AG04450 (cell line): ENCODE measurements at regions of chr20 and their contacts with region 1.

Region 1: GRCh38 chr20:13546497-13547131 is 92.1 kb downstream of the TASP1 start:
- DNase-seq: peak; percentile 30
- H3K4me3 ChIP-seq: no peak overlapping the region
- H3K27ac ChIP-seq: no peak overlapping the region
- H3K27me3 ChIP-seq: no peaks in the 10 kb centered on the region
- CTCF ChIP-seq: peak; percentile 75

Region 2: GRCh38 chr20:12925214-12925755 is 621.3 kb before region 1 on chr20:
- CTCF ChIA-PET with region 1: interaction called, 12 read pairs
- POLR2A ChIA-PET with region 1: no interaction called
- DNase-seq: peak; percentile 77
- H3K4me3 ChIP-seq: no peak overlapping the region
- H3K27ac ChIP-seq: no peak overlapping the region
- H3K27me3 ChIP-seq: peaks cover 18% of the 10 kb centered on the region
- CTCF ChIP-seq: peak; percentile 99

Region 3: GRCh38 chr20:13333793-13334192 is 212.8 kb before region 1 on chr20:
- CTCF ChIA-PET with region 1: interaction called, 16 read pairs
- POLR2A ChIA-PET with region 1: no interaction called
- DNase-seq: no peak
- H3K4me3 ChIP-seq: no peak overlapping the region
- H3K27ac ChIP-seq: no peak overlapping the region
- H3K27me3 ChIP-seq: no peaks in the 10 kb centered on the region
- CTCF ChIP-seq: no peak

Region 4: DNA sequence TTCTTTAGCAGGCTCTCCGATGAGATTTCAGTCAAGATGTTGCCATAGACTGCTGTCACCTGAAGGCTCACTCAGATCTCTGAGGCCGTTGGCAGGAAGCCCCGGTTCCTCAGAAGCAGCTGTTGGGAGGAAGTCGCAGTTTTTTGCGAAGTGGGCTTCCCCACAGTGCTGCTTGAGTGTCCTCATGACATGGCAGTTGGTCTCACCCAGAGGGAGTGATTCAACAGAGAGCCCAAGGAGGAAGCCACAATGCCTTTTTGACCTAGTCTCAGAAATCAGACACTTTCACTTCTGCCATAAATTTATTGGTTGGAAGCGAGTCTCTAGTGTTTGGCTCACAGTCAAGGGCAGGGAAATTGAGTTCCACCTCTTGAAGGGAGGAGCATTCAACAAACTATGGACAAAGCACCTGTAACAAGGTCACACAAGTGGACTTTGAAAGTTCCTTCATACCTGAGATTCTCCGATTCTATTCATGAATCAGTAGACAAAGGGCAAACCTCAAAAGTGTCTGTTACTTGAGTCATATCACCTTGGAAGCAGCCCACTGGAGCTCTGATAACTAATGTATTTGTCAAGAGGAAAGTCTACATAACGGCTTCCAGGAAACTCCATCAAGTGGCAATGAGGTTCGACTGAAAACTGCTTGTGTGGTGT is 116.1 kb before region 1 on chr20:
- CTCF ChIA-PET with region 1: interaction called, 10 read pairs
- POLR2A ChIA-PET with region 1: no interaction called
- DNase-seq: no peak
- H3K4me3 ChIP-seq: no peak overlapping the region
- H3K27ac ChIP-seq: no peak overlapping the region
- H3K27me3 ChIP-seq: no peaks in the 10 kb centered on the region
- CTCF ChIP-seq: no peak

Region 5: DNA sequence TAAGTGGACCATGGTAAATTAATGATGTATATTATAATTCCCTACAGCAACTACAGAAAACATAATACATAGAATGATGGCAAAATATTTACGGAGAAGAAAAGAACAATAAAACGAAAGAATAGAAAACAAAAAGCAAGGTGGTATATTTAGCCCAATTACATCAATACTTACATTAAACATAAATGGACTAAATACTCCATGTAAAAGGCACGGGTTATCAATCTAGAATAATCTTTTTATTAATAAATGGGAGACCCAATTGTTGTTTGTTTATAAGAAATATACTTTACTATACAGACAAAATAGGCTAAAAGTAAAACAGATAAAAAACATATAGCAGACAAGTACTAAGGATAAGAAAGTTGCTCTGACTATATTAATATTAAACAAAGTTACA is 45.1 kb before region 1 on chr20:
- CTCF ChIA-PET with region 1: interaction called, 11 read pairs
- POLR2A ChIA-PET with region 1: no interaction called
- DNase-seq: no peak
- H3K4me3 ChIP-seq: no peak overlapping the region
- H3K27ac ChIP-seq: no peak overlapping the region
- H3K27me3 ChIP-seq: no peaks in the 10 kb centered on the region
- CTCF ChIP-seq: no peak

Region 6: DNA sequence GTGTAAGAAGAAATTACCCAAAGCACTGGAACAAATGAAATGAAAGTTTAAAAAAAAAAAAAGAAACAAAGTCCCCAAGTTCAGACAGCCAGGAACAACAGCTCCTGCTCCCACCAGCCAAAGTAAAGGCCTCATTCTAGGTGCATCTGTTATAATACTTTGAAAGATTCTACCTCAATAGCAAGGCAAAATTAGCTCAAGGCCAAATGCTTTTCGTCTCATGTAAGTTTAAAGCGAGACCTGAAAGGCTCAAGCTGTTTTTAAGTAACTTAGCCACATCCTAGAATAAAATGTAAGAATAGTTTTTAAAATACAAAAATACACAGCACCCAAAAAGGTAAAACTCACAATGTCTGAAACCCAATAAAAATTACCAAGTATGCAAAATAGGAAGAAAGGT is 27.5 kb after region 1 on chr20:
- CTCF ChIA-PET with region 1: interaction called, 30 read pairs
- POLR2A ChIA-PET with region 1: no interaction called
- DNase-seq: no peak
- H3K4me3 ChIP-seq: no peak overlapping the region
- H3K27ac ChIP-seq: no peak overlapping the region
- H3K27me3 ChIP-seq: no peaks in the 10 kb centered on the region
- CTCF ChIP-seq: no peak

Region 7: DNA sequence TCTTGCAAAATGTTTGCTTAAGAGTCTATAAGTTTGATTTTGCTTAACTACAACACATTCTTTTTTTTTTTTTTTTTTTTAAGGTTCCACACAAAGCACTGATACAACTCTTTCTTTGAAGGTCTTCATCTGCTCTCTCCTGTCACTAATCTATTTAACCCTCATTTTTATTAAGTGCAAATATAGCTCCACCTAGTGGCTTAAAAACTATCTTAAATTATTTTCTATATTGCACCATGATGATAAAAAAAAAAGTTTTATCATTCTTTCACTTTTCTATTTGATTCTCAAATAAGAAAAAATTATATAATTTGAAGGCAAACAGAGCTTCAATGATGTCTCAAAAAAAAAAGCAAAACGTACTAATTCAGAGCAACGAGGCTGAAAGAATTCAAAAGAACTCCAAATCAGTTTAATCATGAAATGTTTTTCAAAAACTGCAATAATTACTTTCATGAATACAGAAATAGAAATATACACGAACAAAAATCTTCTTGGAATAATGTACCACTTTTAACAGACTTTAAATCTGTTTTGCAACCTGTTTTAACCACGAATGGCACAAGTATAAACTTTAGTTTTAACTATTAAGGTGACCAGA is 225.3 kb after region 1 on chr20:
- CTCF ChIA-PET with region 1: interaction called, 45 read pairs
- POLR2A ChIA-PET with region 1: no interaction called
- DNase-seq: no peak
- H3K4me3 ChIP-seq: no peak overlapping the region
- H3K27ac ChIP-seq: no peak overlapping the region
- H3K27me3 ChIP-seq: no peaks in the 10 kb centered on the region
- CTCF ChIP-seq: peak; percentile 50